Head of caudate nucleus (tissue), 42 donors: ENCODE measurements at regions of chr1 and their contacts with region 1.

Region 1: DNA sequence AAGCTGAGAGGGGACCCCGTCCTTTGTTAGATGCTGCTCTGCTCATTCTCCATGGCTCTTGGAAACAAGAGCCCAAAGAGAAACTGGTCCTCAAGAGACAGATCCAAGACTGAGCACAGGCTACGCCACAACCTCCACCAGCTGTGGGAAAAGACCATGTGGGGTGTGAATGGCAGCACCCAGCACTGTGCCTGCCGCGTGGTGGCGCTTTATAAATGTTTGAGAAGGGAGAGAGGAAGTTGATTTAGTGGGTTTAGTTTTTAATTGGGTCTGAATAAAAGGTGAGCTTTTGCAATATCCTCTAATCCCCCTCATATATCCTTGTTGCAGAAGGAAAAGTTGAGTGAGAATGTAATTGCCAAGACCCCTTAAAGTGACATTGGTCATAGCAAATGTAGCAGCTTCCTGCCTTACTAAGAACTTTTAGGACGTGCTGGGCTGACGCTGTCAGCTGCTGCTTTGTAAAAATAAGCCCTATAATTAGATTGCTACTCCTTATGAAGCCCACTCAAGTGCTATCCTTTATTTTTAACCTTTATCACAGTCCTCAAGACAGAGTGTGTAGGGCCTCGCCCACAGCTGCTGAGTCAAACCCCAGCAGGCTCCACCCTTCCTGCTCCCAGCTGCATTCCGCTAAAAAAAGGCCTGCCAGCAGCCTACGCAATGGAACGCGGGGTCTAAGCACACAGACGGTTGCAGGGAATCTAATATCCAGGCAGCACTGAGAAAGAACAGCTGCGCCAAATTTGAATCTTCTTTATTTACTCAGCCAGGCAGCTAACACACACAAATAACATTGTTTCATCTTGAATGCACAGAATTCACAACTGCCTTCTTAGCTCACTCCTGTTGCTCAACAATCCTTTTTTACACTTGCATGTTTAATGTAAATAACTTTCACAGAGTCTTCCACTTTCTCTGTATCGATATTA is 47.4 kb upstream of the PRDX6 start:
- DNase-seq: peak; percentile 75 to 98 (median 89)

Region 2: DNA sequence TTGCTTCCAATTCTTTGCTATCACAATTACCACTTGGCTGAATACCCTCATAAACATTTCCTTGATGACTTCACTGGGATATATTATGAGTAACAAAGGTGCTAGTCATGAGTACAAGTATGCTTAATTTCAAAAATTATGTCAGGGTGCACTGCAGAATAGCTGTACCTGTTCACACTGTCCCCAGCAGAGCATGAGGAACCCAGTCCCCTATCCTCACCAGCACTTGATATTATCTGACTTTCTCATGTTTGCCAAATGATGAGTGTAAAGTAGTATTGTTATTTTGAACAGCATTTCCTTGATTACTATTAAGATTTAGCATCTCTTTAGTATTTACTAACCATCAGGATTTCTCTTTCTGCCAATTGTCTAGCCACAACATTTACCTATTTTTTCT is 189.1 kb before region 1 on chr1:
- intact Hi-C with region 1: no loop called
- DNase-seq: no peak

Region 3: DNA sequence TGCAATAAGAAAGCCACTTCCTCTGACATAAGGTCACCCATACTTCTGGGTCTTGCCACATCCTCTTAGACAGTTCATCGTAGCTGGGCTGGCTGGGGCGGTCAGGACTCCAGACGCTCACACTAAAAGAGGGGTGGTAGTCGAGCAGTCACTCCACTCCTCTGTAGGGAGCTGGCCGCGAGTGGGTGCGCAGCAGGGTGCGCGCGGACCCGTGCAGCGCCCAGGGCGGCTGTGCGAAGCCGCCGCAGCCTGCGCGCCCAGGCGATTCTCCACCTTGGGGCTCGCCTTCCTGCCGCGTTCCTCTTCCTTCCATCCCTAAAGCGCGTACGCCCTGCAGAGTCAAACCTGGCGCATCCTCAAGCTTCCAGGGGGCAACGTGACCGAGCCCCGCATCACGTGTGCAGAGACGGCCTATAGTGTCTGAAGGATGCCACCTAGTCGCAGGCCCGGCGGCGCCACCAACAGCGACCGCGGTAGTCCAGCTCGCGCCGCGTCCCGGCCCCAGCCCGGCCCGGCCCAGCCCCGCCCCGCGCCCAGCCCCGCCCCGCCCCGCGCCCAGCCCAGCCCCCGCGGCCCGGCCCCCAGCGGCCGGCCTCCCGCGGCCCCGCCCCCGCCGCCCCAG is 47.0 kb after region 1 on chr1:
- intact Hi-C with region 1: loop called (anchors 5 kb)
- DNase-seq: peak; percentile 92 to 98 (median 96)

Region 4: DNA sequence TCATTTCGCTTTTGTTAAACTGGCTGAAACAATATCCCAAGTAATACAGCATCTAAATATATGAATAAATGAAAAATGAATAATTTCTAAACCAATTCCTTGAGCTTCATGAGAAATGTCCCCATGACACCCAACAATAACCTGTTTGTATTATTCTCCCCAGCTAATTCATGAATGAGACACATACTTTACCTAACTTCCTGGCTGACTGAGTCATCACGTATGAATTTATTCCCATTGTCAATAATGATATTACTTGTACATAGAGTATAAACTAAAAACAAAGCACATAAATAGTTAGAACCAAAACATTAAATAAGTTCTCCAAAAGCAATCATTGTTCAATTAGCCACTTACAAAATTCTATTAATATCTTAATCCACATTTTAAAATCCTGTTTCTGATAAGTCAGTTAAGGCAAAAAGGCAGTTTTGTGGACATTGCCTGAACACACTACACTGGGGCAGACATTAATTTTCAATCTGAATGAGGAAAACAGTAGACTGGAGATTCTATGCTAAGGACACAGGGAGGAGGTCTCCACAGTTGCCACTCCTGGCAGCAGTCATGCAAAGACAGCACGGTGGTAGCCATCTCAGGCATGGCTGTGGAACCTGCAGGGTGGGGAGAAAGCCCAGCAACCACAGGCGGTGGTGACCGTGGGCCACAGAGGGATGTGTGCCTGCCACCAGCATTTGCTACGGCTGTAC is 125.0 kb after region 1 on chr1:
- intact Hi-C with region 1: no loop called
- DNase-seq: no peak

Region 5: DNA sequence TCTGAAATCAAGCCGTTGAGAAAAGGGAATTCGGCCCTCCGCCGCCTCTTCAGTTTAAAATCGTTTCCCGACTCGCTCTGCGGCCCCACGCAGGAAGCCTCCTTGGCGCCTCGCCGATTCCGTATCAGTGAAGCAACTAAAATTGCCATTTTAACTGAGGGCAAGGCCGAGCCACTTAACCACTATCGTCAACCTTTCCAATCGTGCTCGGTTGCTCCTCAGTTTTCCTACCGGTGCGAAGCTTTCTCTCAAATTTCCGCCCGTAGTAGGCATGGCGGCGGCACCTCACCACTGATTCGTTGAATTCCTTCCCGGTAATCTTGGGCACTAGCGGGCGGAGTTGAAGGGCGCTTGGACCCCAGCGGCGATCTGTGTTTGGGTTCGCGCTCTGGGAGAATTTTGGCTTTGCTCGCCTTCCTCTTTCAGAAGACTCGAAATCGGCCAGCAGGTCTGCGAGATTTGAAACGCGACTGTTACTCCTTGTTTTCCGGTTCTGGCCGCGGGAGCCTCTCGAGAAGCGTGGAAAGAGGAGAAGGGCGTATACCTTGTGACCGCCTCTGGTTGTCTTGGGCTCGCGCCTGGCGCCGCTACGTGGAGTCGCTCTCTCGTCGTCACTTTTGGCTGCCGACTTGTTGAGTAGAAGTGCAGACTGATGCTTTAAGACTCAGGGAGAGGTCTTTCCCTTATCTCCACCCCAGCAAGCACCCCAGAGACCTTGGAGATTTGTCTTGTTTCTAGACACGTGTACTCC is 394.8 kb after region 1 on chr1 and contains the starts of genes CENPL and DARS2:
- intact Hi-C with region 1: loop called (anchors 2 kb)
- DNase-seq: peak; percentile 91 to 98 (median 96)

Region 6: GRCh38 chr1:174159252-174160108 is 729.7 kb after region 1 on chr1 and contains the start of gene RABGAP1L:
- intact Hi-C with region 1: loop called (anchors 5 kb)
- DNase-seq: peak; percentile 73 to 97 (median 92)